Activated CD4-positive, alpha-beta T cell treated with anti-CD3 and anti-CD28 coated beads for 36 hours (primary cell): ENCODE measurements at regions of chr21 and their contacts with region 1.

Region 1: GRCh38 chr21:45820171-45821091 is 161.1 kb upstream of the COL6A1 start:
- DNase-seq: peak; percentile 91
- ATAC-seq: peak; percentile 32
- H3K4me3 Mint-ChIP-seq: no peak overlapping the region
- H3K27ac Mint-ChIP-seq: peak overlapping the region; percentile 99
- H3K4me1 Mint-ChIP-seq: peaks cover 51% of the 10 kb centered on the region
- H3K27me3 Mint-ChIP-seq: peaks cover 2% of the 10 kb centered on the region

Region 2: DNA sequence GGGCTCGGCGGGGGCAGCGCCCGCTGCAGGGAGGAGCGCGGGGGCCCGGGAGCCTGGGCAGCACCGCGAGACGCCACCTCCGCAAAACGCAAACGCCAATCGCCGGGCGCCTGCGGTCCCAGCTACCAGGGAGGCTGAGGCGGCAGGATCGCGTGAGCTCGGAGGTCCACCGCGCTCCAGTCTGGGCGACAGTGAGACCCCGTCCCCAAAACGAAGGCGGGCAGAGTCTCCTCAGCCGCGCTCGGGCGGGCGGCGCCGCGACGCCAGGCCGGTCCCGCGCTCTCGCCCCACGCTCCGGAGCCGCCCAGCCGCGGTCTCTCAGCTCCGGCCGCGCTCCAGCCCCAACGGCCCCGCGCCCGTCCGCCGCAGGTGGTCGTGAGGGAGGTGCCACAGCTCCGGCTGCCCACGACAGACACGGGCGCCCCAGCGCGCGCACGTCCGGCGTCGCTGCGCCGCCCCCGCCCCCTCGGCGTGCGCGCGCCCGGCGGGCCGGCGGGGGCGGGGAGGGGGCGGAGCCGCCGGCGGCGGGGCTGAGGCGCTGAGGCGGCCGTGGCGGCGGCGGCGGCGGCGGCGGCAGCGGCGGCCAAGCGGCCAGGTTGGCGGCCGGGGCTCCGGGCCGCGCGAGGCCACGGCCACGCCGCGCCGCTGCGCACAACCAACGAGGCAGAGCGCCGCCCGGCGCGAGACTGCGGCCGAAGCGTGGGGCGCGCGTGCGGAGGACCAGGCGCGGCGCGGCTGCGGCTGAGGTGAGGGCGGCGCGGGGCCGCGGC is 746.2 kb before region 1 on chr21 and contains the start of gene ADARB1:
- CTCF ChIA-PET with region 1: no interaction called
- POLR2A ChIA-PET with region 1: no interaction called
- intact Hi-C with region 1: loop called in 1 of 2 experiments (anchors 2 kb)
- DNase-seq: peak; percentile 75
- ATAC-seq: peak; percentile 13
- H3K4me3 Mint-ChIP-seq: peak within 1 kb of the TSS; percentile 88
- H3K27ac Mint-ChIP-seq: peak within 1 kb of the TSS; percentile 91
- H3K4me1 Mint-ChIP-seq: peaks cover 42% of the 10 kb centered on the region
- H3K27me3 Mint-ChIP-seq: no peaks in the 10 kb centered on the region
- total RNA-seq, gene ADARB1: 32.8 to 37.7 TPM

Region 3: DNA sequence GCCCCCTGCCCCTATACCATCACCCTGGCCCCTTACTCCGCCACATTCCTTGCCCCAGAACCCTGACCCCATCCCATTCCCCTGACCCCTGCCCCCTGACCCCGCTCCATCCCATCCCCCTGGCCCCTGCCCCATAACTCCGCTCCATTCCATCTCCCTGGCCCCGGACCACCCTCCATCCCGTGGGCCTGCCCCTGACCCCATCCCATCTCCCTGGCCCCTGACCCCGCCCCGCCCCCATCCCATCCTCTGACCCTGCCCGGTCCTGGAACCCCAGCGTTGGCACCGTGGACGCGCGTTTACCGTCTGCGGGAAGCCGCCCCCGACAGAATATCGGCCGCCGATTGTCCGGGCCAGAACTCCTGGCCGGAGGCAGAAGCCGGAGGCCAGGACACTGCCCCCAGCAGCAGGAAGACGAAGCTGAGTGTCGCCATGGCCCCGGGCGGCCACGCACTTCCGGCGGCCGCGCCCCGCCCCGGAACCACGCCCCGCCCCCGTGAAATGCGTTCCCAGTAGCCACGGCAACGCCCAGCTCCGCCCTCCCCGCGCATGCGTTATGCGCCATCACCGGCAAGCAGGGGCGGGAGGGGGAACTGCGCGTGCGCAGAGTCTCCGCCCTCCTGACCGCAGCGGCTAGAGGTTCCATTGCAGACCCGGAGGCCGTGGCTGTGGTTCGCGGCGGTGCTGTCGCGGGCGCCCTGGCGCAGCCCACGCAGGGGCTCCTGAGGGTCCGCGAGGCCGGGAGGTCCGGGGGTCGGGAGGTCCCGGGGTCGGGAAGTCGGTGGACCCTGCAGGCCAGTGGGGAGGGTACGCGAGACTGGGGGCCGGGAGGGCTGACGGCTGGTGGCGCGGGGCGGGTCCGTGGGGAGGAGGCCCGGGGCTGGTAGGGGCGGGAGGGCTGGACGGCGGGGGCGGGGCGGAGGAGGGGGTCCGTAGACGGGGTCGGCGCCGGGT is 532.7 kb before region 1 on chr21 and contains the start of gene POFUT2:
- CTCF ChIA-PET with region 1: no interaction called
- POLR2A ChIA-PET with region 1: no interaction called
- intact Hi-C with region 1: loop called (anchors 1 kb)
- DNase-seq: peak; percentile 99
- ATAC-seq: peak; percentile 86
- H3K4me3 Mint-ChIP-seq: peak within 1 kb of the TSS; percentile 75
- H3K27ac Mint-ChIP-seq: no peak within 1 kb of the TSS
- H3K4me1 Mint-ChIP-seq: peaks cover 15% of the 10 kb centered on the region
- H3K27me3 Mint-ChIP-seq: no peaks in the 10 kb centered on the region
- total RNA-seq, gene POFUT2: 14.7 to 14.9 TPM

Region 4: DNA sequence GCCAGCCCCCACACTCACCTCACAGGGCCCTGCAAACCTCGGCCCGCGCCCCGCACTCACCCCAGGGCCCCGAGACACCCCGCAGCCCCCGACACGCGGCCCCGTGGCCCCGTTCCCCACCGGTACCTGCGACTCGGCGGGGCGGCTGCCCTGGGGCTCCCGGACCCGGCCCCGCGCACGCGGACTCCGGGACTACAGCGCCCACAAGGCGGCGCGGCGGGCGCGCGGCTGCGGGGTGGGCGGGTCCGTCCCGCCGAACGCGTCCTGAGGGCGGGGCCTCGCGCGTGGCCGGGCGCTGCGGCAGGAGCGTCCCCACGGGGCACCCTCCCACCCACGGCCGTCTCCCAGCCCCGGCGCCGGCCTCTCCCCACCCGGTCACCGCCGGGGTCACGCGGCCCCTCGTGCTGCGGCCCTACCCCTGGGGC is 278.2 kb before region 1 on chr21 and contains the start of gene SLC19A1:
- CTCF ChIA-PET with region 1: no interaction called
- POLR2A ChIA-PET with region 1: interaction called, 3 read pairs
- intact Hi-C with region 1: loop called in 1 of 2 experiments (anchors 1 kb)
- DNase-seq: peak; percentile 86
- ATAC-seq: peak; percentile 86
- H3K4me3 Mint-ChIP-seq: peak within 1 kb of the TSS; percentile 80
- H3K27ac Mint-ChIP-seq: peak within 1 kb of the TSS; percentile 80
- H3K4me1 Mint-ChIP-seq: peaks cover 20% of the 10 kb centered on the region
- H3K27me3 Mint-ChIP-seq: no peaks in the 10 kb centered on the region
- total RNA-seq, gene SLC19A1: 46.1 to 50.0 TPM

Region 5: DNA sequence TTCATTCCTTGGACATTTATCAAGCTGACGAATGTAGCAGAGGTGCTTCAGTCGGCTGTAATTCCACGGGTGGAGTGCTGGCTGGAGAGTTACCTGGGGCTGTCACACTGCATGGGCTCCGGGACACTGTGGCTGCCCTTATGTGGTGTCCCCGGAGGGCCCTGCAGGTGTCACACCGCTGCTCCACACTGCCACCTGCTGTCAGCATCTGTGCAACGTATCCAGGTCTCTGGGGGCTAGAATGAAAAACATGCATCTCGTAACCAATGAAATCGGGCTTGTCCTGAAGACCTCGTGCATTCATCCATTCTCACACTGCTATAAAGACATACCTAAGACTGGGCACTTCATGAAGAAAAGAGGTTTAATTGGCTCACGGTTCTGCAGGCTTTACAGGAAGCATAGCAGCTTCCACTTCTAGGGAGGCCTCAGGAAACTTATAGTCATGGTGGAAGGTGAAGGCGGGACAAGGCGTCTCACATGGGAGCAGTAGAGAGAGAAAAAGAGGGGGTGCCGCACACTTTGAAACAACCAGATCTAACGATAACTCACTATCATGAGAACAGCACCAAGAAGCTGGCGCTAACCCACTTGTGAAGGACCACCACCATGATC is 223.6 kb before region 1 on chr21:
- CTCF ChIA-PET with region 1: interaction called, 3 read pairs
- POLR2A ChIA-PET with region 1: interaction called, 6 read pairs
- intact Hi-C with region 1: loop called (anchors 1 kb)
- DNase-seq: peak; percentile 92
- ATAC-seq: peak; percentile 72
- H3K4me3 Mint-ChIP-seq: no peak overlapping the region
- H3K27ac Mint-ChIP-seq: peak overlapping the region; percentile 4
- H3K4me1 Mint-ChIP-seq: peaks cover 11% of the 10 kb centered on the region
- H3K27me3 Mint-ChIP-seq: no peaks in the 10 kb centered on the region

Region 6: GRCh38 chr21:45768751-45769070 is 51.7 kb before region 1 on chr21:
- CTCF ChIA-PET with region 1: interaction called, 4 read pairs
- POLR2A ChIA-PET with region 1: interaction called, 3 read pairs
- intact Hi-C with region 1: loop called (anchors 1 kb)
- DNase-seq: peak; percentile 64
- ATAC-seq: peak; percentile 3
- H3K4me3 Mint-ChIP-seq: peak overlapping the region; percentile 62
- H3K27ac Mint-ChIP-seq: peak overlapping the region; percentile 98
- H3K4me1 Mint-ChIP-seq: peaks cover 57% of the 10 kb centered on the region
- H3K27me3 Mint-ChIP-seq: no peaks in the 10 kb centered on the region

Region 7: DNA sequence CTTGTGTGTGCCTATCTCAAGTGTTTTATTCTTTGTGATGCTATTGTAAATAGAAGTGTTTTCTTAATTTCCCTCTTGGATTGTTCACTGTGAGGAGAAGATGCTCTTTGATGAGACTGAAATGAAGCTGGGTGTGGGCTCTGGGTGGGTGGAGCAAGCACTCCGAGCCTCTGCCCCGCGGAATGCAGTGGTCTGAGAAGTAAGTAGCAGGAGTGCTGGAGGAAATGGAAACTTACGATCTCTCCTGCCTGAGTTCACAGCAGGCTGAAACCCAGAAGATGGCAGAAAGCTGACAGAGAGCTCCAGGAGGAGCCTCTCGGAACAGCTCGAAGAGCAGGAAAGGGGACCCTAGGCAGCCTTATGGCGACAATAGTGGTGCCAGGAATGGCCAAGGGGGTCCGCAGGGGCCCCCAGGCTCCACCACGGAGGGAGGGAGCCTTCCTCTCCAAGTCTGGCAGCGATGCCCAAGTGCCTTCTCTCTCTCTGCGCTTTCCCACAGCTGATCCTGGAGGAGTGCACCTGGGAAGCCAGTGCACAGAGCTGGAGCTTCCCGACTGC is 34.3 kb after region 1 on chr21:
- CTCF ChIA-PET with region 1: no interaction called
- POLR2A ChIA-PET with region 1: no interaction called
- intact Hi-C with region 1: no loop called
- DNase-seq: no peak
- ATAC-seq: no peak
- H3K4me3 Mint-ChIP-seq: no peak overlapping the region
- H3K27ac Mint-ChIP-seq: no peak overlapping the region
- H3K4me1 Mint-ChIP-seq: no peaks in the 10 kb centered on the region
- H3K27me3 Mint-ChIP-seq: no peaks in the 10 kb centered on the region